ENCODE measurements at regions of chr14 and their contacts with region 1.

Region 1: DNA sequence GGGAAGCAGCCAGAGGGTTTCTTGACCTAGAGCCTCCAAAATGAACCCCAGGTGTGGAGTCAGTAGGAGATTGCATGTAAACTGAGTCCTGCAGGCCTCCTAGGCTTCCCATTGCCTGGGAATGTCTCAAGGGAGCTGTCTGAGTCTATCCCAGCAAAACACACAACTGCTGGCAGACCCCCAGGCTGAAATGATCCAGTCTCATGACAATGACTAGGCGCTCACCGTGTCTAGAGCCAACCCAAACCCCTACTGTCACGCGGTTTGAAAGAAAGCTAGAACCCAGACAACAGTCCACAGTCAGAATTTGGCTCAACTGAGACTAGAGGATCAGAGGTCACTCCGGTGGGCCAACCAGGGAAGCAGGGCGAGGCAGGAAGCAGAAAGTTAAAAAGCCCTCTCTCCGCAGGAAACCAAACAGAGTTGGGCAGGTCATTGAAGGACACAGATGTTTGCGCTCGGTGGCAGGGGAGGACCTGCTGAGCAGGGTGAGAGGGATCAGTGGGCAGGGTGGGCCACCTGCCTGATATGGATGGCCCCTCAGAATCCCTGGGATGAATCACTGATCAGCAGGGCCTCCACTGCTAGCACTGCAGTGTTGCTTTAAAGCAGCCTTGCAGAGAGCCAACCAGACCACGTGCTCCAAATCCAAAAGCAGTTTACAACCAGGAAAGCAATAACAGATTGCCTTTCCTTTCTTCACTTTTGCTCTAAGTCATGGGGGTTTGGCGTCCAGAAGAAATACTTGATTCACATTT is 23.8 kb downstream of the ACTN1 start:
- DNase-seq: no peak
- ATAC-seq: no peak
- H3K4me3 ChIP-seq: no peak overlapping the region
- H3K4me3 Mint-ChIP-seq: peak overlapping the region; percentile 43
- H3K27ac ChIP-seq: peak overlapping the region in 1 of 2 donors; percentile 23
- H3K27ac Mint-ChIP-seq: peak overlapping the region; percentile 70
- H3K4me1 ChIP-seq: peaks cover 76% of the 10 kb centered on the region
- H3K4me1 Mint-ChIP-seq: peaks cover 93% of the 10 kb centered on the region
- H3K27me3 ChIP-seq: no peaks in the 10 kb centered on the region
- H3K27me3 Mint-ChIP-seq: no peaks in the 10 kb centered on the region
- CTCF ChIP-seq: no peak

Region 2: DNA sequence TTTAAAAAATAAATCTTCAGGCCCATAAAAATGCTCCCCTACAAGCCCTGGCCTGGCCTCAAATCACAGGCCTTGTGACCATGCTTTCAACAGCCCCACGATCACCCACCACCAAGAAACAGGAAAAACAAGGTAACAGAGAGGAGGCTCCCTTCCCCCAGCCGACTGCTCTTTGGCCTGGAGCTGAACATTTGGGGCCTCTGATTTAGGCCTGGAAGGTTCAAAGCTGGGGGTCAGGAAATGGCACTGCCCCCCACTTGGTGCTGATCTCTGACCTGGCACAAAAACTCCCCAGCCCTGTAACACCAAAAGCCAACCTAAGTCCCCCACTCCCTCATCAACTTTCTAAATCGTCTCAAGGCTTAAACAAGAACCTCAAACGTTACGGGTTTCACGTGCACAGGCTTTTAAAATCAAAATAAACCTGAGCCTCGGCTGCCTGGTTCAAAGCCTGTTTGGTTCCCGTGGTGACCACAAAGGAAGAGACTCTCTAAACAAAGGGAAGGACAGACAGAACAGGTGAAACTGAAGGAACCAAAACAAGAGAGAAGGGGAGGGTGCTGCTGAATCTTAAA is 14.8 kb after region 1 on chr14:
- CTCF ChIA-PET with region 1: no interaction called
- POLR2A ChIA-PET with region 1: interaction called, 37 read pairs
- intact Hi-C with region 1: no loop called
- DNase-seq: peak; percentile 40 to 84 (median 58)
- ATAC-seq: peak; percentile 63
- H3K4me3 ChIP-seq: peak overlapping the region; percentile 17
- H3K4me3 Mint-ChIP-seq: peak overlapping the region; percentile 84
- H3K27ac ChIP-seq: peak overlapping the region; percentile 89 to 94
- H3K27ac Mint-ChIP-seq: peak overlapping the region; percentile 97
- H3K4me1 ChIP-seq: peaks cover 93% of the 10 kb centered on the region
- H3K4me1 Mint-ChIP-seq: peaks cover 91% of the 10 kb centered on the region
- H3K27me3 ChIP-seq: no peaks in the 10 kb centered on the region
- H3K27me3 Mint-ChIP-seq: no peaks in the 10 kb centered on the region
- CTCF ChIP-seq: no peak